HEK293T (cell line): ENCODE measurements at regions of chr17 and their contacts with region 1.

Region 1: GRCh38 chr17:46942441-46943217 is 19.7 kb downstream of the GOSR2 start:
- DNase-seq: peak; percentile 87

Region 2: GRCh38 chr17:46865100-46865499 is 77.5 kb before region 1 on chr17:
- CTCF ChIA-PET with region 1: no interaction called
- POLR2A ChIA-PET with region 1: no interaction called
- DNase-seq: no peak

Region 3: DNA sequence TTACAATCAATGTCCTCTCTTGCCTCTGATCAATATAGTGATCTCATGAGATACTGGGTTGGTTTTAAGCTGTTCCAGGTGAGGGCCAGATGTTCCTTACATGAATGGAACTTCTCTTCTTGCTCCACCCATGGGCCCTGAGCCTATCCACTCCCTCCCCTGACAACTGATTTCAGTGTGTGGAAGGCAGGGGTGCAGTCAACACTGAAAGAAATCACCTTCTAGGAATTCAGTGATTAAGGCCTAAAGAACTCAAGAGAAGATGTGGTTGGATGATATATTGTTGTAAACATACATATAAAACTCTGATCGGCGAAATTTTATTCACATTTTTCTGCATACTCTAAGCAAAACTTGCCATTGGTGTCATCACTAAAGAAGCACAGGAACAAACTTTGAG is 26.4 kb before region 1 on chr17:
- CTCF ChIA-PET with region 1: no interaction called
- POLR2A ChIA-PET with region 1: no interaction called
- DNase-seq: no peak

Region 4: GRCh38 chr17:46929413-46929812 is 13.2 kb before region 1 on chr17:
- CTCF ChIA-PET with region 1: no interaction called
- POLR2A ChIA-PET with region 1: no interaction called
- DNase-seq: no peak

Region 5: GRCh38 chr17:46995841-46996571 is 53.4 kb after region 1 on chr17:
- CTCF ChIA-PET with region 1: interaction called, 11 read pairs
- POLR2A ChIA-PET with region 1: interaction called, 3 read pairs
- DNase-seq: no peak

Region 6: DNA sequence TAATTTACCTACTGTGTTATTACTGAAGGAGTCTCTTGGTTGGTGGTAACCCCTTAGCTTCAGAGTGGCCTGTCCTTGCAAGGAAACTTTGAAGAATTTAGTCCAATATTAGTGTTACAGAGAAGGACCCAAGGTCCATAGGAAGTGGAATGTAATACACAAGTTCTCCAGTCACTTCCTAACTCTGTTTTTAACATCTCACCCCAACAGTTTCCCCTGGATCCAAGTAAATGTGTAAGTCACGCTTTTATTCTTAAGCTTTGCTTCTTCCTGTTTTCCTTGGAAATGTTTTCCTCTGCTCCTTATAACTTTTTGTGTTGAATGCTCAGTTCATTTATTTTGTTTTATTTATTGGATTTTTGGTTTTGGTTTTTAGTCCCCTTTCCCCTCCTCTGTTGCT is 62.3 kb after region 1 on chr17:
- CTCF ChIA-PET with region 1: interaction called, 11 read pairs
- POLR2A ChIA-PET with region 1: interaction called, 3 read pairs
- DNase-seq: no peak